Sigmoid colon (tissue), 7 donors: ENCODE measurements at regions of chr2 and their contacts with region 1.

Region 1: GRCh38 chr2:47906157-47907038 is at the start of gene FBXO11:
- DNase-seq: peak; percentile 98
- H3K4me3 ChIP-seq: peak within 1 kb of the TSS; percentile 73 to 97 (median 86)
- H3K27ac ChIP-seq: peak within 1 kb of the TSS; percentile 98 to 100 (median 100)
- H3K4me1 ChIP-seq: peaks cover 0 to 31% (median 26%) of the 10 kb centered on the region in 4 donors
- H3K27me3 ChIP-seq: no peaks in the 10 kb centered on the region
- CTCF ChIP-seq: peak; percentile 42 to 56 (median 50)
- EP300 ChIP-seq: no peak
- POLR2A ChIP-seq: peak; percentile 69 to 78
- total RNA-seq, gene FBXO11: 43.8 to 71.7 (median 49.6) TPM

Region 2: GRCh38 chr2:47867205-47867604 is 39.2 kb before region 1 on chr2:
- intact Hi-C with region 1: loop called (anchors 5 kb)
- DNase-seq: no peak
- H3K4me3 ChIP-seq: no peak overlapping the region
- H3K27ac ChIP-seq: peak overlapping the region; percentile 17 to 60 (median 50)
- H3K4me1 ChIP-seq: peaks cover 0 to 78% (median 53%) of the 10 kb centered on the region in 4 donors
- H3K27me3 ChIP-seq: no peaks in the 10 kb centered on the region
- CTCF ChIP-seq: no peak
- EP300 ChIP-seq: no peak
- POLR2A ChIP-seq: no peak

Region 3: DNA sequence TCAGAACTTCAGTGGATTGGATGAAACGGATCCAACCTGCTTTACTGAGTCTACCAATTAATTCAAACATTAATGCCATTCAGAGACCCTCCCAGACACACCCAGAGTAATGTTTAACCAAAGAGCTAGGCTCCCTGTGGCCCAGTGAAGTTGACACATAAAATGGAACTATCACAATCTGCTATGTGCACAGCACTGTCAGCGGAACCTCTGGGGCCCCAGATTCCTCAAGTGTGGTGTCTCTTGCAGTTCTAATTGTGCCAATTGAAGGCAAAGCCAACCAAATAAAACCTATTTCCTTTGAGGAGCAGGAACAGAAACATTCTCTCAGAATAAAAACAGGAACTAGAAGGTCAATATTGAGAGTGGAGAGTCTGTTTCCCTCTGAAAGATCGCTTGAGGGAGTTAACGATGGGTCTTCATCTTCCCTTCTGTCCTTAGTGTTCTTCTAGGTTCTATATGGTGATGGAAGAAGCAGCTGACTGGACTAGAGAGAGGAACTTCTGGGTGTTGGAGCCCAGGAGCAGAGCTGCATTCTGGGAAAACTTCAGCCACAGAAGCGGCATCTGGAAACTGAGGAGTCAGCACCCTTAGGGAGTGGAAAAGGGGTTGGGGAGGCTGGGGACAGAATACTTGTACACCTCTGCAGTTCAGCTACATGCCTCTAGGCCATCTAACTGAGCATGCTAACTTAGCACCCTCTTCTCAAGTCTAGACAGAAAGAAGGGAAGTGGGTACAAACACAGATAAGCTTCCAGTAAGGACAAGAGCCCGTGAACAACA is 174.3 kb after region 1 on chr2:
- intact Hi-C with region 1: no loop called
- DNase-seq: no peak
- H3K4me3 ChIP-seq: no peak overlapping the region
- H3K27ac ChIP-seq: no peak overlapping the region
- H3K4me1 ChIP-seq: no peaks in the 10 kb centered on the region
- H3K27me3 ChIP-seq: no peaks in the 10 kb centered on the region
- CTCF ChIP-seq: no peak
- EP300 ChIP-seq: no peak
- POLR2A ChIP-seq: no peak

Region 4: DNA sequence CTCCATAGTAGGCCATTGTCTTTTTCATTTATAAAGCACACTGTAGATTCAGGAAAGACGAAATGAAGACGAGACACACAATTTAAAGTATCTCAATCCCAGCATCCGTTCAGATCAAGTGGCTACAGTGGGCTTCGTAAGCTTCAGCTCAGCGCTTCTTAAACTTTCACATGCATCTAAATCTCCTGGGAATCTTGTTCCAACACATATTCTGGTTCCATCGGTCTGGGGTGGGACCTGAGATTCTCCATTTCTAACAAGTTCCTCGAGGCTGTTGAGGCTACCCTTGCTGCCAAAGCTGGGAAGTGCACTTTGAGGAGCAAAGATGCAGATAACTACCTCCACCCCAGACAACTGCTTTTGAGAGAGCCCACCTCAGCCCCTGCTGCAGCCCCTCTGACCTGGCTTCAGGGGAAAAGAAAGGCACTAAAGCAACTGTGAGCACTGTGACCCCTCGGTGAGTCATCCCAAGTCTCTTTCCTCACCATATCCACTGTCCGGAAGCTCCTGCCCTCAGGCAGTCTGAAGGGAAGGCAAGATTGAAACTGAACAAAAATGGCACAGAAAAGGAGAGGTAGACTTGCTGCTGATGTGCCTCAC is 201.0 kb after region 1 on chr2:
- intact Hi-C with region 1: loop called (anchors 2 kb)
- DNase-seq: no peak
- H3K4me3 ChIP-seq: no peak overlapping the region
- H3K27ac ChIP-seq: peak overlapping the region in 3 of 4 donors; percentile 69 to 71 (median 69)
- H3K4me1 ChIP-seq: peaks cover 0 to 27% (median 17%) of the 10 kb centered on the region in 4 donors
- H3K27me3 ChIP-seq: no peaks in the 10 kb centered on the region
- CTCF ChIP-seq: no peak
- EP300 ChIP-seq: no peak
- POLR2A ChIP-seq: no peak